Caco-2 (cell line): ENCODE measurements at regions of chr5 and their contacts with region 1.

Region 1: GRCh38 chr5:92775711-92776615 is 805.1 kb downstream of the NR2F1-AS1 start:
- DNase-seq: peak; percentile 46 to 50
- H3K4me3 ChIP-seq: no peak overlapping the region
- H3K4me3 Mint-ChIP-seq: peak overlapping the region; percentile 57
- H3K27ac Mint-ChIP-seq: peak overlapping the region; percentile 82
- H3K4me1 ChIP-seq: peaks cover 41% of the 10 kb centered on the region
- H3K4me1 Mint-ChIP-seq: peaks cover 33% of the 10 kb centered on the region
- H3K27me3 ChIP-seq: no peaks in the 10 kb centered on the region
- H3K27me3 Mint-ChIP-seq: no peaks in the 10 kb centered on the region
- CTCF ChIP-seq: no peak

Region 2: DNA sequence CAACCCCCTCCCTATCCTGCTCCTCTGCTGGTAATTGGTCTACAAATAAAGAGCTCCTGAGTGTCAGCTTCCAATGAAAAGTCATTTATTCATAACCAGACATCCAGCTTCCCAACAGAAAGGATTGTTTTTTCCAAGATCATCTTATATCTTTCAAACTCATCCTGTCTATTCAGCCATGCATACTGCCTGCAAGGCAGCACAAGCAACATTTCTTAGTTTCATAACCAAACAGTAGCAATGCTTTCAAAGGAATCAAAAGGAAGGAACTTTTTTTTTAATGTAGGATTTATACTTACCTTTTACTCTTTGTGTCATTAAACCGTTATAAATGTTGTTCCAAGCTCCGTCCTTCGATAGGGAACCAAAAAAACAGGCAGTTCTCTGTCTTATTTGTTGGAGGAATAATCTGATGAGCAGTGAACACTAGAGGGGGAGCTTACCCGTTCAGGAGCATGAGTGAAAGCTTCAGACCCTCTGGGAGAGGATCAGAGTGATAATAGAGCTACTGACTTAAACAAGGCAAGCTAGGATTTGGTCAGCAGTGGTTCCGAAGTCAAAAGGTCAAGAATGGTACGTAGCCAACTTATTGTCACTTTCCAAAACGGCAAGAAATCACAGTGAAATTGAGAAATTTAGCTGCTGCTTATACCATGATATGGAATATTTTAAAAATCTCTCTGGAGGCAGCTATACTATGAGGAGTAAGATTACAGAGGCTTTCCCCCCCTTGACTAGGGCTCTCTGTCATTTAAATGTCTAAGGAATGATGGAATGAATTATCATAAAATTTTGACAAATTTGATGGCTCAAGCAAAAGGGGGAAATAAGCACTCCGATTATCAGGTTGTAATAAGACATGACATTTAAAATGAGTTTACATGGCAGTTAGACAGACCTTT is 87.9 kb before region 1 on chr5:
- CTCF ChIA-PET with region 1: interaction called, 8 read pairs
- POLR2A ChIA-PET with region 1: no interaction called
- intact Hi-C with region 1: loop called (anchors 2 kb)
- DNase-seq: peak; percentile 38 to 40
- H3K4me3 ChIP-seq: no peak overlapping the region
- H3K4me3 Mint-ChIP-seq: no peak overlapping the region
- H3K27ac Mint-ChIP-seq: no peak overlapping the region
- H3K4me1 ChIP-seq: no peaks in the 10 kb centered on the region
- H3K4me1 Mint-ChIP-seq: no peaks in the 10 kb centered on the region
- H3K27me3 ChIP-seq: no peaks in the 10 kb centered on the region
- H3K27me3 Mint-ChIP-seq: no peaks in the 10 kb centered on the region
- CTCF ChIP-seq: peak; percentile 43 to 44

Region 3: DNA sequence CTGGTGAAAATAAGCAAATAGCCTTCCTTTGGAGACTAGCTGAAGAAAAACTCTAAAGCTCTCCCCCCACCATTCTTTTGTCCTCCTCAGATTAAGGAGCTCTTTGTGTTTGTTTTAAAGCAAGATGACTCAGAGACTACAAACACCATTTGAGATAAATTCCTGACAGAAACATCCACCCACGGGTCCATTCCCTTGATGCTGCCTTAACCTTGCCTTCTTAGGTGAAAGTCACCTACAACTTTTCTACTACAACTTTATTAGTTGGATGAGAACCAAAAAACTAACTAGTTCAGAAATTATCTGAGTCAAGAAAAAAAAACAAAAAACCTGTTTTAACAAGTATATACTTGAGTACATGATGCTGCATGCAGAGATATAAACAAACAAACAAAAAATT is 26.0 kb before region 1 on chr5:
- CTCF ChIA-PET with region 1: no interaction called
- POLR2A ChIA-PET with region 1: no interaction called
- intact Hi-C with region 1: loop called (anchors 1 kb)
- DNase-seq: peak; percentile 45 to 49
- H3K4me3 ChIP-seq: no peak overlapping the region
- H3K4me3 Mint-ChIP-seq: peak overlapping the region; percentile 28
- H3K27ac Mint-ChIP-seq: peak overlapping the region; percentile 72
- H3K4me1 ChIP-seq: peaks cover 12% of the 10 kb centered on the region; the same call in 1 of the 2 replicates
- H3K4me1 Mint-ChIP-seq: peaks cover 8% of the 10 kb centered on the region
- H3K27me3 ChIP-seq: no peaks in the 10 kb centered on the region
- H3K27me3 Mint-ChIP-seq: no peaks in the 10 kb centered on the region
- CTCF ChIP-seq: no peak

Region 4: GRCh38 chr5:92795633-92796032 is 19.7 kb after region 1 on chr5:
- CTCF ChIA-PET with region 1: no interaction called
- POLR2A ChIA-PET with region 1: no interaction called
- intact Hi-C with region 1: loop called (anchors 2 kb)
- DNase-seq: no peak
- H3K4me3 ChIP-seq: no peak overlapping the region
- H3K4me3 Mint-ChIP-seq: no peak overlapping the region
- H3K27ac Mint-ChIP-seq: no peak overlapping the region
- H3K4me1 ChIP-seq: no peaks in the 10 kb centered on the region
- H3K4me1 Mint-ChIP-seq: no peaks in the 10 kb centered on the region
- H3K27me3 ChIP-seq: no peaks in the 10 kb centered on the region
- H3K27me3 Mint-ChIP-seq: no peaks in the 10 kb centered on the region
- CTCF ChIP-seq: no peak